ENCODE measurements at regions of chr1 and their contacts with region 1.

Region 1: DNA sequence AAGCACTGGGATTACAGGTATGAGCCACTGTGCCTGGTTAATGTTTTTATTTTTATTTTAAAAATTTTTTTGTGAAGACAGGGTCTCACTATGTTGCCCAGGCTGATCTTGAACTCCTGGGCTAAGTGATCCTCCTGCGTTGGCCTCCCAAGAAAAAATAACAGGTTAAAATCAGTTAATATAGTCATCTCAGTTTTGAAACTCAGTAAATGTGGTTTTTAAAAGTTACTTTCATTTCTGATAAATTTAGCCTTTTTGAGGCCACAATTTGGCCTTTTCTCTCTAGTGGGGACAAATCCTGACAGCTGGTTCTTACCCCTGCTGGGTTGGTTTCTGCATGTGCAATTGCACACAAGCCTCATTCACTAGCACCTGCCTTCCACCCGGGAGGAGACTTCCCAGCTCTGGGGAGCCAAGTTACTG is 13.3 kb downstream of the PMF1 start:
- DNase-seq: no peak
- H3K4me3 ChIP-seq: no peak overlapping the region
- H3K27ac ChIP-seq: no peak overlapping the region
- H3K4me1 ChIP-seq: no peaks in the 10 kb centered on the region
- H3K27me3 ChIP-seq: no peaks in the 10 kb centered on the region
- CTCF ChIP-seq: no peak

Region 2: DNA sequence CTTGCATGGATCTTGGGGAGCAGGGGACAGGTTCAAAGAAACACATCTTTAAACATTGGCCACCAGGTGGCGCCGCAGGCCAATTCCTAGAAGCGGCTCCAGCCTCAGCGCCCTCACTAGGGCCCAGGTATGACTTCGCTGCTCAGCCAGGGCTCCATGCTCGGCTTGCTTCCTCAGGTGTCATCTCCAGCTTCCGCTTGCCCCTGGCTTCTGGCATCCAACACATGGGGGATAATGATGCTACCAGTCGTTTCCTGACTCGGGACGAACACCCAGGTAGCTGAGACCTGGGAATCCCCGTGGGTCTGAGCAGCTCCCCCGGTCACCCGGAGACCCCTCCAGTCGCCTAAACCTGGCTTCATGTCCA is 135.3 kb before region 1 on chr1:
- intact Hi-C with region 1: loop called (anchors 5 kb)
- DNase-seq: peak; percentile 82
- H3K4me3 ChIP-seq: no peak overlapping the region
- H3K27ac ChIP-seq: no peak overlapping the region
- H3K4me1 ChIP-seq: peaks cover 24% of the 10 kb centered on the region
- H3K27me3 ChIP-seq: no peaks in the 10 kb centered on the region
- CTCF ChIP-seq: peak; percentile 87

Region 3: GRCh38 chr1:156146020-156146768 is 79.9 kb before region 1 on chr1:
- intact Hi-C with region 1: loop called (anchors 5 kb)
- DNase-seq: peak; percentile 71
- H3K4me3 ChIP-seq: peak overlapping the region; percentile 40
- H3K27ac ChIP-seq: no peak overlapping the region
- H3K4me1 ChIP-seq: peaks cover 24% of the 10 kb centered on the region
- H3K27me3 ChIP-seq: peaks cover 18% of the 10 kb centered on the region
- CTCF ChIP-seq: peak; percentile 79

Region 4: GRCh38 chr1:156319664-156320063 is 93.5 kb after region 1 on chr1:
- intact Hi-C with region 1: no loop called
- DNase-seq: no peak
- H3K4me3 ChIP-seq: no peak overlapping the region
- H3K27ac ChIP-seq: no peak overlapping the region
- H3K4me1 ChIP-seq: no peaks in the 10 kb centered on the region
- H3K27me3 ChIP-seq: no peaks in the 10 kb centered on the region
- CTCF ChIP-seq: peak; percentile 57